ENCODE measurements at regions of chr17 and their contacts with region 1.

Region 1: DNA sequence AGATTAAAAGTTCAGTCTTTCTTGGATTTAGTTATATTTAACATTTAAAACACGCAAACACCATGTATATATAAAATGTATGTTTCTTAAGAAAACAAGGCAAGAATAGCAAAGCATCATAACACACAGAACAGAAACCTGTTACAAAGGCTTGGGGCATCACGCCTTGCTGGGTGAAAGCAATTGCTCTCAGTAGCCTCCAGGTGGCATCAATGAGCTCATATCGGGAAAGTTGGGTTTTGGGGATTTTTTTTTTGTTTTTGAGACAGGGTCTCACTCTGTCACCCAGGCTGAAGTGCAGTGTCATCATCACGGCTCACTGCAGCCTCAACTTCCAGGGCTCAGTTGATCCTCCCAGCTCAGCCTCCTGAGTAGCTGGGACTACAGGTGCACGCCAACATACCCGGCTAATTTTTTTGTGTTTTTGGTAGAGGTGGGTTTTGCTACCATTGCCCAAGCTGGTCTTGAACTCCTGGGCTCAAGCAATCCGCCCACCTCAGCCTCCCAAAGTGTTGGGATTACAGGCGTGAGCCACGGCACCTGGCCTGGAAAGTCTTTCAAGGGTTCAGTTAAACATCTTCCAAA is 56.9 kb downstream of the CYB5D2 start:
- DNase-seq: peak; percentile 76
- CTCF ChIP-seq: peak; percentile 65

Region 2: DNA sequence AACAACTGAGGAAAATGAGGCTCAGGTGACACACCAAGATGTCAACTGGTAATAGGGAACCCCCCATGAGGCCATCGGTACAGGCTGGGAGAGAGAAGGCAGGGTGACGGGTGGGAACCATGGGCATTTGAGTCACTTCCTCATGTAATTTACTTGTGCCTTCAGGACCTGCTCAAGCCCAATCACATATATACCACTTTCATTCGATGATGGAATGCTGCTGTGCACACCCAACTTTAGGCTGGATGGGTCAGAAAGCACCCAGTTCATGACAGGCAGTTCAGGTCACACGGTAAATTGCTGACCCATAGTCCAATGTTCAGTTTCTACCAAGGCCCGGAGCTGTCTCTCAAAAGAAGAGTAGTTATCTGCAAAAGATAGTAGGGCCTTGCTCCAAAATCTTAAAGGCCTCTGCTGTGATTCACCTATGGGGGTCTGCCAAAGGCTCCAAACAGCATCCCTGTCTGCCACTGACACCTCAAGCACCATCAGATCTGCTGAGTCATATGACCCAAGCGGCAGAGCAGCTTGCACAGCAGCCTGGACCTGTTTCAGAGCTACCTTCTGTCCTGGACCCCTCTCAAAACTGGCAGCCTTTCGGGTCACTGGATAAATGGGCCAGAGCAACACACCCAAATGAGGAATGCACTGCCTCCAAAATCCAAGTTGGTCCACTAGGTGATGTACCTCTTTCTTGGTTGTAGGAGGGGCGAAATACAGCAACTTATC is 81.7 kb before region 1 on chr17:
- CTCF ChIA-PET with region 1: no interaction called
- POLR2A ChIA-PET with region 1: no interaction called
- DNase-seq: no peak
- CTCF ChIP-seq: no peak

Region 3: GRCh38 chr17:4175921-4176807 is 23.7 kb before region 1 on chr17:
- CTCF ChIA-PET with region 1: interaction called, 12 read pairs
- POLR2A ChIA-PET with region 1: no interaction called
- DNase-seq: peak; percentile 36
- CTCF ChIP-seq: no peak

Region 4: DNA sequence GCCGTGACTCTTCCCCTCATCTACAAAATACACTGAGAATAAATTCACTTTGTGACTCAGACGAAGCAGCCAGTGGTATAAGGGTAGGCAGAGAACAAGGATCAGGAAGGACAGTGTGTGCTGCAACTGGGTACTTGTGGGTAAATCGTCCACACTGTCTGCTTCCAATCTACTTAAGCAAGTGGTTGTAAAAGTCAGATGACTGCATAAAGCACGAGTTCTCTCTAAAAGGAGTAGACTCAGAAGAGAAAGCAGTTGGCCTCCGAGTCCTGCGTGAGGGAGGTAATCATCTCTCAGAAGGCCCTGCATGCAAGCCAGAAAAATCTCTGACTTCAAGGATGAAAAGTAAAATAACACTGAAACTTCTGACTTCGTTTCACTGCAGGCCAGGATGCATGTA is 20.7 kb after region 1 on chr17:
- CTCF ChIA-PET with region 1: interaction called, 24 read pairs
- POLR2A ChIA-PET with region 1: no interaction called
- DNase-seq: no peak
- CTCF ChIP-seq: no peak

Region 5: DNA sequence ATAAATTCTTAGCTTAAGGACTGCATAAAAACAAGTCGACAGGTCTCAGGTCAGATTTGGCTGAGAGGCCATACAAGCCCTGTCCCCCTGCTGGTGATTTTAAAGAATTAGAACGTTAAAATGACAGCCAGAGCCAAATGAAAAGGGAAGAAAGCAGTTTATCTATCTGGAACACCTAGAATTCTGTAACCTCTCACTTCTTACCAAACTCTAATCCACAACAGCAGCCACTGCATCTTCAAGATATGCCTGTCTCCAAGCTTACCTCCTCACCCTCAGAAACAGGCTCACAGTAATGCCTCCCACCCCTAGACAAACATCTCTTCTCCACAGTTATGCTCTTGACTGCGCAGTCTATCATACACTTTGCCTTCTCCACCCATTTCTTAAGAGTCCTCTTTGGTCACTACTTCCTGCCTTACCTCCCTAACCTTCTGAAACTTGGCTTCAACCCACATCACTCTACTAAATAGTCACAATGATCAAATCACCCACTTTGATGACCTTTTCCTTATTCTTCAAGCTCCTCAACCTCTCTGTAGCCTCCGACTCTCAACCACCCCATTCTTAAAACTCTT is 49.6 kb after region 1 on chr17:
- CTCF ChIA-PET with region 1: interaction called, 10 read pairs
- POLR2A ChIA-PET with region 1: no interaction called
- DNase-seq: peak; percentile 59
- CTCF ChIP-seq: peak; percentile 48

Region 6: GRCh38 chr17:4310349-4311060 is 110.6 kb after region 1 on chr17:
- CTCF ChIA-PET with region 1: no interaction called
- POLR2A ChIA-PET with region 1: no interaction called
- DNase-seq: no peak
- CTCF ChIP-seq: no peak

Region 7: DNA sequence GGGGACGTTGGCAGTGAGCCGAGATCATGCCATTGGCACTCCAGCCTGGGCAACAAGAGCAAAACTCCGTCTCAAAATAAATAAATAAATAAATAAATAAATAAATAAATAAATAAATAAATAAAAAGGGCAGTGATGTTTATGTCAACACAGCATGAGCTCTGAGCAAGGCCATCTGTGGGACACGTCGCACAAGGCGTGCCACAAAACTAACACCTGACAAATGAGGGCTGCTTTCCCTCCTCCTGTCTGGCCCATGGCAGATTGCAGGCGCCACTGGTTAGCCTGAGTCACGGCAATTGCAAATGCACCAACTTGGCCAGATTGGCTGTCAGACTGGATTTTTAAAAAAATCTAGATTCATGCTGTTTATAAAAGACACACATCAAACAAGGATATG is 207.9 kb after region 1 on chr17:
- CTCF ChIA-PET with region 1: interaction called, 62 read pairs
- POLR2A ChIA-PET with region 1: no interaction called
- DNase-seq: no peak
- CTCF ChIP-seq: no peak

Region 8: DNA sequence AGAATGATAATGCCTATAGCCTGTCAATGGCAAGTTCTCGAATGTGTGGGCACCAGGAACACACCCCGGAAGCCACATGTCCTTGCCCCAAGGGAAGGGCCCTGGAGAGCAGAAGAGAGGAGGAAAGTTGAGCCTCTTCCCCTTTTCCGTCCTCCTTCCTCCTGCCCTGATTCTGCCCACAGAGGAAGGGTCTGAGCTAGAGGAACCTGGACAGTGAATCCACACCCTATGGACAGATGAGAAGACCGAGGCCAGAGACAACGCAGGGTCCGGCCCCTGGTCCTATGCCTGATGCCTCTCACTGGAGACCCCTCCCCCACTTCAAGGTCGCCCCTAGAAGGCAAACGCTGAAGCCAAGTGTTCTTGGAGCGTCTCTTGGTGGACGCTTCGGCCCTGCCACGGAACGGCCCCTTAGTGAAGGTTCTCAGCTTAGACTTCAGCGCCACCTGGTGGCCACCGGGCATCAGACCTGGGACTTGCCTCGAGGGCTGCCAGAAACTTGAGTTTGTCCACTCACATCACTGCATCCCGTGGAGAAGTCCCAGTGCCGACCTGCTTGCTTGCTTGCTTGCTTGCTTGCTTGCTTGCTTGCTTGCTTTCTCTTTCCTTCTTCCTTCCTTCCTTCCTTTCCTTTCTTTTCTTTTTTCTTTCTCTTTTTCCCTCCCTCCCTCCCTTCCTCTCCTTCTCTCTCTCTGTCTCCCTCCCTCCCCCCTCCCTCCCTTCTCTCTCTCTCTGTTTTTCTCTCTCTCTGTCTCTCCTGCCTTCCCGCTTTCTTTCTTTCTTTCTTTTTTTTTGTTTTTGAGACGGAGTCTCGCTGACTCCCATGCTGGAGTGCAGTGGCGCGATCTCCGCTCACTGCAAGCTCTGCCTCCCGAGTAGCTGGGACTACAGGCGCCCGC is 213.3 kb after region 1 on chr17:
- CTCF ChIA-PET with region 1: interaction called, 62 read pairs
- POLR2A ChIA-PET with region 1: no interaction called
- DNase-seq: peak; percentile 89
- CTCF ChIP-seq: peak; percentile 99

Region 9: GRCh38 chr17:4420692-4421131 is 220.8 kb after region 1 on chr17:
- CTCF ChIA-PET with region 1: interaction called, 62 read pairs
- POLR2A ChIA-PET with region 1: no interaction called
- DNase-seq: peak; percentile 83
- CTCF ChIP-seq: peak; percentile 78